ENCODE measurements at regions of chr1 and their contacts with region 1.

Region 1: GRCh38 chr1:153572569-153573015 is 6.9 kb upstream of the S100A2 start:
- DNase-seq: peak; percentile 56 to 84 (median 80)
- H3K4me3 ChIP-seq: peak overlapping the region in 11 of 59 donors; percentile 2 to 30 (median 12)
- H3K27ac ChIP-seq: peak overlapping the region in 54 of 59 donors; percentile 1 to 90 (median 60)
- H3K27me3 ChIP-seq: no peaks in the 10 kb centered on the region
- CTCF ChIP-seq: peak; percentile 37 to 97 (median 84)

Region 2: GRCh38 chr1:152960452-152961044 is 612.0 kb before region 1 on chr1:
- intact Hi-C with region 1: no loop called
- DNase-seq: no peak
- H3K4me3 ChIP-seq: no peak overlapping the region
- H3K27ac ChIP-seq: no peak overlapping the region
- H3K27me3 ChIP-seq: peaks cover 0 to 8% (median 0%) of the 10 kb centered on the region in 45 donors
- CTCF ChIP-seq: no peak

Region 3: GRCh38 chr1:153352523-153352922 is 220.1 kb before region 1 on chr1:
- intact Hi-C with region 1: loop called in 1 of 2 experiments (anchors 5 kb)
- DNase-seq: peak in 9 of 10 donors; percentile 56 to 82 (median 70)
- H3K4me3 ChIP-seq: no peak overlapping the region
- H3K27ac ChIP-seq: no peak overlapping the region
- H3K27me3 ChIP-seq: peaks cover 0 to 34% (median 14%) of the 10 kb centered on the region in 45 donors
- CTCF ChIP-seq: peak; percentile 84 to 99 (median 95)

Region 4: GRCh38 chr1:153532769-153533599 is 39.6 kb before region 1 on chr1:
- intact Hi-C with region 1: loop called (anchors 2 kb)
- DNase-seq: peak; percentile 55 to 88 (median 72)
- H3K4me3 ChIP-seq: peak overlapping the region in 52 of 59 donors; percentile 1 to 84 (median 30)
- H3K27ac ChIP-seq: peak overlapping the region in 51 of 59 donors; percentile 1 to 95 (median 76)
- H3K27me3 ChIP-seq: no peaks in the 10 kb centered on the region
- CTCF ChIP-seq: peak in 55 of 56 donors; percentile 42 to 90 (median 73)

Region 5: GRCh38 chr1:153626922-153627796 is 54.6 kb after region 1 on chr1 and contains the start of gene S100A13:
- intact Hi-C with region 1: loop called in 1 of 2 experiments (anchors 5 kb)
- DNase-seq: peak in 7 of 10 donors; percentile 44 to 66 (median 65)
- H3K4me3 ChIP-seq: peak within 1 kb of the TSS; percentile 33 to 75 (median 58)
- H3K27ac ChIP-seq: peak within 1 kb of the TSS; percentile 51 to 97 (median 92)
- H3K27me3 ChIP-seq: no peaks in the 10 kb centered on the region
- CTCF ChIP-seq: peak in 51 of 56 donors; percentile 15 to 68 (median 50)
- total RNA-seq, gene S100A13: 52.0 to 204 (median 98.7) TPM

Region 6: GRCh38 chr1:153749408-153750005 is 176.9 kb after region 1 on chr1:
- intact Hi-C with region 1: loop called (anchors 1 to 5 kb)
- DNase-seq: peak; percentile 57 to 87 (median 80)
- H3K4me3 ChIP-seq: no peak overlapping the region
- H3K27ac ChIP-seq: peak overlapping the region in 33 of 59 donors; percentile 2 to 67 (median 33)
- H3K27me3 ChIP-seq: no peaks in the 10 kb centered on the region
- CTCF ChIP-seq: peak; percentile 58 to 98 (median 91)